ENCODE measurements at regions of chr17 and their contacts with region 1.

Region 1: DNA sequence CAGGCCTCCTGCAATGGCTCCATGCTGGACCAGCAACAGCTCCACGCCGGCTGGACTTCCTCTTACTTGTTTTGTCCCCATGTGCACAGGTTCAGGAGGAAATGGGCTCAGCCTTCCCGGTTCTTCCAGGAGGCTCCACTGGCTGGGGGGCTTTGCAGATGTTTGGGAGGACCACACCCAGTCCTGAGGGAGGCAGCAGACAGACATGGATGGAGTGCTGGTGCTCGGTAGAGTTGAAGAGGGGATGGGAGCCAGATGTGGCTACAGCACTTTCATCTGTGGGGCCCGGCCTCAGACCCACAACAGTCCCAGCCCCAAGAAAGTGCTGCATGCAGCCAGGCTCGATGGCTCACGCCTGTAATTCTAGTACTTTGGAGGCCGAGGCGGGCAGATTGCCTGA is 21.8 kb downstream of the NARF start:
- DNase-seq: no peak
- ATAC-seq: no peak
- H3K4me3 ChIP-seq: no peak overlapping the region
- H3K27ac ChIP-seq: no peak overlapping the region
- H3K4me1 ChIP-seq: no peaks in the 10 kb centered on the region
- H3K27me3 ChIP-seq: no peaks in the 10 kb centered on the region
- CTCF ChIP-seq: no peak

Region 2: GRCh38 chr17:82502207-82502606 is 21.9 kb after region 1 on chr17:
- CTCF ChIA-PET with region 1: interaction called, 11 read pairs
- POLR2A ChIA-PET with region 1: no interaction called
- intact Hi-C with region 1: no loop called
- DNase-seq: no peak
- ATAC-seq: no peak
- H3K4me3 ChIP-seq: no peak overlapping the region
- H3K27ac ChIP-seq: no peak overlapping the region
- H3K4me1 ChIP-seq: no peaks in the 10 kb centered on the region
- H3K27me3 ChIP-seq: no peaks in the 10 kb centered on the region
- CTCF ChIP-seq: no peak

Region 3: DNA sequence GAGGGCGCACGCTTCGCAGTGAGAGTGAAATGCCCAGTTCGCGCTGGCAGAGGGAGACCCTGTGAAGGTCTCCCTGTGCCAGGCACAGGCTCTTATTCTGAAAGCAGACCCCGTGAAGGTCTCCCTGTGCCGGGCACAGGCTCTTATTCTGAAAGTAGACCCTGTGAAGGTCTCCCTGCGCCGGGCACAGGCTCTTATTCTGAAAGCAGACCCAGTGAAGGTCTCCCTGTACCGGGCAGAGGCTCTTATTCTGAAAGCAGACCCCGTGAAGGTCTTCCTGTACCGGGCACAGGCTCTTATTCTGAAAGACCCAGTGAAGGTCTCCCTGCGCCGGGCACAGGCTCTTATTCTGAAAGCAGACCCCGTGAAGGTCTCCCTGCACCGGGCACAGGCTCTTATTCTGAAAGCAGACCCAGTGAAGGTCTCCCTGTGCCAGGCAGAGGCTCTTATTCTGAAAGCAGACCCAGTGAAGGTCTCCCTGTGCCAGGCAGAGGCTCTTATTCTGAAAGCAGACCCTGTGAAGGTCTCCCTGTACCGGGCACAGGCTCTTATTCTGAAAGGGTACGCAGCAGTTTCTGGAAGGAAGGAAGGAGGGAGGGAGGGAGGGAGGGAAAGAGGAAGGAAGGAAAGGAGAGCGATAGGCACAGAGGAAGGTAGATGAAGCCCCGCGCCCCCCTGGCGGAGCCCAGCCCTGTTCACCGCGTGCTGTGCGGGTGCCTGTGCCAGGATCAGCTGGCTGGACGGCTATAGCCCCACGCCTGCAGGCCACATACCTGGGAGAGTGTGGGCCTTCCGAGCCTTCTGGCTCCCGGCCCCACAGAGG is 112.7 kb after region 1 on chr17:
- CTCF ChIA-PET with region 1: no interaction called
- POLR2A ChIA-PET with region 1: no interaction called
- intact Hi-C with region 1: no loop called
- DNase-seq: peak; percentile 83
- ATAC-seq: peak; percentile 55
- H3K4me3 ChIP-seq: peak overlapping the region; percentile 63
- H3K27ac ChIP-seq: peak overlapping the region; percentile 50
- H3K4me1 ChIP-seq: peaks cover 15% of the 10 kb centered on the region
- H3K27me3 ChIP-seq: no peaks in the 10 kb centered on the region
- CTCF ChIP-seq: no peak